ENCODE measurements at regions of chr3 and their contacts with region 1.

Region 1: DNA sequence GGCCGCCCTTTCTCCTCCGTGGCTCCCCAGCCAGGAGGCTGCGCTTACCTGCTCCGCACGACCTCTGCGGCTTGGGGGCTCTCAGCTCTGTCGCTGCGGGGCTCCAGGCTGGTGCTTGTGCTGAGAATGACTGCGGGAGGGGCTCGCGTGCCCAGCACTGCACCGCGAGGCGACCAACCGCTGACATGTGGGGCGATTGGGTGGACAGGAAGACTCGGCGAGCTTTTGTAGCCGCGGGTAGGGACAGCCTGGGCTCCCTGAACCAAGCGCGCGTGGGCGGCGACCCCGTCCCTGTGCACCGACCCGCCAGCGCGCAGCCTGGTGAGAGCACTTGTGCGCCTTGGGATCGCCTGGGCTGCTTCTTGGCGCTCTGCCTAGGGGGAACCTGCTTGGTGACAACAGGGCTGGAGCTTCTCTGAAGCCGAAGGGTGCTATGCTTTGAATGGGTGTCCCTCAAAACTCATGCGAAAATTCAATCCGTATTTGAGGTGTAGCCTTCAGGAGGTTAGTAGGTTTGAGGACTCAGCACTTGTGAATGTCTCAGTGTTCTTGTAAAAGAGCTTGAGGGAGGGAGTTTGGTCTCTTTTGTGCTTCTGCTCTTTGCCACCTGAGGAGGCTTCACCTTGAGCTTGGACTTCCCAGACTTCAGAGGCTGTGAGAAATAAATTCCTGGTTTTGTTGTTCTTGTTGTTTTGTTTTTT is 50.4 kb downstream of the IL12A start:
- DNase-seq: peak in 1 of 3 donors; percentile 29
- ATAC-seq: peak in 3 of 4 donors; percentile 28 to 48 (median 40)
- H3K4me3 ChIP-seq: no peak overlapping the region
- H3K27ac ChIP-seq: no peak overlapping the region
- H3K4me1 ChIP-seq: peaks cover 0 to 6% (median 0%) of the 10 kb centered on the region in 4 donors
- H3K27me3 ChIP-seq: peaks cover 0 to 4% of the 10 kb centered on the region in 2 donors
- CTCF ChIP-seq: no peak
- POLR2A ChIP-seq: no peak

Region 2: GRCh38 chr3:159902546-159903314 is 136.3 kb before region 1 on chr3:
- intact Hi-C with region 1: no loop called
- DNase-seq: no peak
- ATAC-seq: no peak
- H3K4me3 ChIP-seq: no peak overlapping the region
- H3K27ac ChIP-seq: no peak overlapping the region
- H3K4me1 ChIP-seq: no peaks in the 10 kb centered on the region
- H3K27me3 ChIP-seq: no peaks in the 10 kb centered on the region
- CTCF ChIP-seq: no peak
- POLR2A ChIP-seq: no peak

Region 3: DNA sequence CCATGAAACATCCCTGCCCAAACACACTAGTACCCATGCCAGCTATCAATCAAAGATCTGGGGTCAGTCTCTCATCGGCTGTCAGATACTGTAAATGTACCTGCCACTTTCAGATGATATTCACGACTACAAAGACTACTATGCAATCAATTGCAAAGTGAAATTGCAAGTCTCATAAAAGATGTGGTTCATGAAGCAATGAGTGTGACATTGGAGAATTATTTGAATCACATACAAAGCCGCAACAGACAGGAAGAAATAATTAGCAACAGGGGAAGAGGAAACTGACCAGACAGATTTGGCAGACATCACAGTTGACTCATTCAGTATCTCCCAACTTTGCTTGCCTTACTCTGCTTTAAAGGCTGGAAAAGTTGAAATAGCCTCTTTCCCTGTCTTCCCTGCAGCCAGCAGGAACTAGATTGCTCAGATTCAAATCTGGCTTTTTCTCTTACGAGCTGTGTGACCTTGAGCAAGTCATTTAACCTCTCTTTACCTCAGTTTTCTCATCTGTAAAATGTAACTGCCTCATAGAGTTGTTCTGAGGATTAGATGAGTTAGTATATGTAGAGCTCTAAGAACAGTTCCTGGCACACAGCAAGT is 90.5 kb after region 1 on chr3:
- intact Hi-C with region 1: loop called (anchors 10 kb)
- DNase-seq: no peak
- ATAC-seq: peak in 3 of 4 donors; percentile 14 to 83 (median 46)
- H3K4me3 ChIP-seq: no peak overlapping the region
- H3K27ac ChIP-seq: no peak overlapping the region
- H3K4me1 ChIP-seq: no peaks in the 10 kb centered on the region
- H3K27me3 ChIP-seq: no peaks in the 10 kb centered on the region
- CTCF ChIP-seq: no peak
- POLR2A ChIP-seq: no peak

Region 4: DNA sequence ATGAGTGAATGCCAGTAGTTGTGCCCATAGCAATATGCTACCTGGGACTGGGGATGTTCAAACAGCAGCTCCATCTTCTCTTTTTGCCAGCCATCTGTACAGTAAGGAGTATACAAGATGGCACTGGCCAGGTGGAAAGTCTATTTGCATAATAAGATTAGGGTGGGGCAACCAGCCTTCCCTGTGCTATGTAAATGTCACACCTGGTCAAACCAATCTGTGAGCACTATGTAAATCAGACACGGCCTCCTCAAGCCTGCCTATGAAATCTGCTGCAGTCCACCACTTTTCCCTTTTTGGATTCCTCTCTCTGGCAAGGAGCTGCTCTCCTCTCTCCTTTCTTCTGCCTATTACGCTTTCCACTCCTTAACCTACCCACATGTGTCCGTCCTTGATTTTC is 239.2 kb after region 1 on chr3:
- intact Hi-C with region 1: no loop called
- DNase-seq: no peak
- ATAC-seq: no peak
- H3K4me3 ChIP-seq: no peak overlapping the region
- H3K27ac ChIP-seq: no peak overlapping the region
- H3K4me1 ChIP-seq: no peaks in the 10 kb centered on the region
- H3K27me3 ChIP-seq: no peaks in the 10 kb centered on the region
- CTCF ChIP-seq: no peak
- POLR2A ChIP-seq: no peak

Region 5: GRCh38 chr3:160413613-160414248 is 374.7 kb after region 1 on chr3:
- intact Hi-C with region 1: loop called in 1 of 2 experiments (anchors 10 kb)
- DNase-seq: peak in 2 of 3 donors; percentile 35 to 59
- ATAC-seq: peak; percentile 89 to 98 (median 95)
- H3K4me3 ChIP-seq: no peak overlapping the region
- H3K27ac ChIP-seq: no peak overlapping the region
- H3K4me1 ChIP-seq: no peaks in the 10 kb centered on the region
- H3K27me3 ChIP-seq: no peaks in the 10 kb centered on the region
- CTCF ChIP-seq: peak; percentile 78 to 92 (median 86)
- POLR2A ChIP-seq: no peak